Vagina (tissue), 2 donors: ENCODE measurements at regions of chr5 and their contacts with region 1.

Region 1: DNA sequence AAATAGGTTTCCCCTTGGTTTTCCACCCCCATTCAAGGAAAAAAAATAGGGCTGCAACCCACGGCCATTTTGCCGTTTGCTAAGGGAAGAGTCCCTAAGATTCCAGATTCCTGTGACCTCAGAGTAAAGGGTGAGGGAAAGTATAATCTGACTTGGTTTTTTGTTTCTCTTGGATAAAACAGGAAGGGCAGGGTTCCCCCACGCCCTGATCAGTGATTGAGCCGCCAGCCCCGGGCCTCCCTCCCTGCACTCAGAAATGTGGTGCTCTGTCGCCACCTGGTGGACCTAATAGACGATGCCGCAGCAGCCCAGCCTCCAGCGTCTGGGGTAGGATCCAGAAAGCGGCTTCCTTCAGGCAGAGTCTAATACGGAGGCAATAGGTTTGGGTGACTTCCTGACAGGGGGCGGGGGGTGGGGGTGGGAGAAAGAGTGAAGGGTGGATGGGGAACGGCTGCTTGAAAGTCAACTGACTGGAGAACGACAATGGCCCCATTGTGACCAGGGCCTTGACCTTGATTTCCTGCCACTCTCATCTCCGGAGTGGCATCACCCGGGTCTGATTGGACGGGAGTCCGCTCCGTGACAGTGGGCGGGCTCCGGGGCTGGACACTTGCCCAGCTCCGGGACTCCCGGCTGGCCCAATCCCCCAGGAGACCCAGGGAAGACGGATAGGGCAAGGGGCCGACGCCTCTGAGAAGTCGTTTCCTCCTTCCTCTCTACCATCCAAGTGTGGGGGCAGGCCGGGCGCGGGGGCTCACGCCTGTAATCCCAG is 17.8 kb upstream of the CYSTM1 start:
- DNase-seq: no peak
- H3K4me3 ChIP-seq: peak overlapping the region; percentile 30 to 49
- H3K27ac ChIP-seq: peak overlapping the region; percentile 68
- H3K4me1 ChIP-seq: peaks cover 6% of the 10 kb centered on the region
- H3K27me3 ChIP-seq: no peaks in the 10 kb centered on the region
- CTCF ChIP-seq: peak; percentile 84 to 88 (median 87)
- POLR2A ChIP-seq: no peak

Region 2: GRCh38 chr5:140073296-140073695 is 83.9 kb before region 1 on chr5:
- intact Hi-C with region 1: loop called (anchors 2 kb)
- DNase-seq: no peak
- H3K4me3 ChIP-seq: no peak overlapping the region
- H3K27ac ChIP-seq: no peak overlapping the region
- H3K4me1 ChIP-seq: no peaks in the 10 kb centered on the region
- H3K27me3 ChIP-seq: no peaks in the 10 kb centered on the region
- CTCF ChIP-seq: peak; percentile 35 to 72 (median 50)
- POLR2A ChIP-seq: no peak